ENCODE measurements at regions of chr2 and their contacts with region 1.

Region 1: DNA sequence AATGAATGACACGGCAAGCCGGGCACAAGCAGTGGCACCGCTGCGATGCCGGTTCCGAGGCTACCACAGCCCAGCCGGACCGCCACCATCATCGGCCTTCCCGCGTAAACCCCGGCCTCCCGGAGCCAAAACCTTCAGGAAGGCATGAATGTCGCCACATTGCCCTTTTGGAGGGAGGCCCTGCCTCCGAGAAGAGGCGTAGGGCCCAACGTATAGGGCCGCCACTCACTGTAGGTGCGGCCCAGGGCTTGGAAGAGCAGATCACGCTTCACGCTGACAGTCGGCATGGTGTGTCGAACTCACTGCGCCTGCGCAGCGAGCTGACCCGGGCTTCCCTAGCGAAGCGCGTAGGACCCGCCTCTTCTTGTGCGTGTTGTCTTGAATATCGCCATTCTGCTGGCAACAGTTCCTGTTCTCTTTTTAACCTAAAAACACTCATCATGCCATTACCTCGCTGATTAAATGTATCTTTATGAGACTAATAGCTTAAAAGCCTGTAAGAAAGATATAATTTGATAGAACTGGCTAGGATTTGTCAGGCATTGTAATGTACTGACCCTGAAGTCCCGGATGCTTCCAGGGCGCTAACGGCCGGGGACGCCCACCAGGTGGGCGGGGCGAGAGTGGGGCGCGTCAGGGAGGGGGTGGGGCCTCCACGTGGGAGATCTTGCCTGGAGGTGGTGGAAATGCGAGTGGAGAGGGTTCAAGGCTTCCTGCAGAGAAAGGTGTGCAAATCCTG is at the start of gene FARSB:
- DNase-seq: peak; percentile 94
- H3K4me3 Mint-ChIP-seq: peak within 1 kb of the TSS; percentile 98
- H3K27ac Mint-ChIP-seq: peak within 1 kb of the TSS; percentile 98
- H3K4me1 Mint-ChIP-seq: peaks cover 37% of the 10 kb centered on the region
- H3K27me3 Mint-ChIP-seq: no peaks in the 10 kb centered on the region
- total RNA-seq, gene FARSB: 46.4 to 46.8 TPM

Region 2: GRCh38 chr2:222424729-222425671 is 231.0 kb before region 1 on chr2:
- CTCF ChIA-PET with region 1: no interaction called
- intact Hi-C with region 1: loop called (anchors 1 kb)
- DNase-seq: peak; percentile 67
- H3K4me3 Mint-ChIP-seq: peak overlapping the region; percentile 83
- H3K27ac Mint-ChIP-seq: peak overlapping the region; percentile 88
- H3K4me1 Mint-ChIP-seq: peaks cover 42% of the 10 kb centered on the region
- H3K27me3 Mint-ChIP-seq: peaks cover 56% of the 10 kb centered on the region

Region 3: DNA sequence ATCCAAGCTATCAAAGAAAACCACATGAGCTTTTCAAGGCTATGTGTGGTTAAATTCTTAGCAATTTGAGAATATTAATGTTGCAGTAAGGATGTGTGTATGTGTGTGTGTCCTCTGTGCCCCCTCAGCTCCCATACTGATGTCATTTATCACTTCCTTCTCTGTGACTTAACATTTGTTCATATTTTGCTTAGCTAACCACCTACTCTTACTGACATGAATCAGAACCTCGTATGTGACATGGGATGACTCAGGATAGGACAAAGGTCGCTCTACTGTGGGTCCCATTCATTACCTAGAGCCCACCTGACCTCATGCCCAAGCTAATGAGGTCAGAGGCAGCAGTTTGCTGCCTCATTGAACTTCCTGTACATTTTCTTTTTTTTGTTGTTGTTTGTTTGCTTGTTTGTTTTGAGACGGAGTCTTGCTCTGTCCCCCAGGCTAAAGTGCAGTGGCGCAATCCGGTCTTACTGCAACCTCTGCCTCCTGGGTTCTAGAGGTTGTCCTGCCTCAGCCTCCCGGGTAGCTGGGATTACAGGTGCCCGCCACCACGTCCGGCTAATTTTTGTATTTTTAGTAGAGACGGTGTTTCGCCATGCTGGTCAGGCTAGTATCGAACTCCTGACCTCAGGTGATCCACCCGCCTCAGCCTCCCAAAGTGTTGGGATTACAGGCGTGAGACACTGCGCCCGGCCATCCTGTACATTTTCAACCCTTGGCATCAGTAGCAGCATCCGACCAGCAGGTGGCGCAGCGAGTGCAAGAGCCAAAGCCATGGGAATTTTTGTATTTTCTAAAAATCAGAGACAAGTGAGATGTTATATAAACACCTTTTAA is 52.0 kb after region 1 on chr2:
- CTCF ChIA-PET with region 1: interaction called, 3 read pairs
- intact Hi-C with region 1: loop called (anchors 2 kb)
- DNase-seq: peak; percentile 88
- H3K4me3 Mint-ChIP-seq: no peak overlapping the region
- H3K27ac Mint-ChIP-seq: no peak overlapping the region
- H3K4me1 Mint-ChIP-seq: peaks cover 6% of the 10 kb centered on the region
- H3K27me3 Mint-ChIP-seq: peaks cover 22% of the 10 kb centered on the region

Region 4: GRCh38 chr2:222743251-222743812 is 87.4 kb after region 1 on chr2:
- CTCF ChIA-PET with region 1: no interaction called
- intact Hi-C with region 1: no loop called
- DNase-seq: no peak
- H3K4me3 Mint-ChIP-seq: no peak overlapping the region
- H3K27ac Mint-ChIP-seq: no peak overlapping the region
- H3K4me1 Mint-ChIP-seq: peaks cover 5% of the 10 kb centered on the region
- H3K27me3 Mint-ChIP-seq: peaks cover 12% of the 10 kb centered on the region

Region 5: DNA sequence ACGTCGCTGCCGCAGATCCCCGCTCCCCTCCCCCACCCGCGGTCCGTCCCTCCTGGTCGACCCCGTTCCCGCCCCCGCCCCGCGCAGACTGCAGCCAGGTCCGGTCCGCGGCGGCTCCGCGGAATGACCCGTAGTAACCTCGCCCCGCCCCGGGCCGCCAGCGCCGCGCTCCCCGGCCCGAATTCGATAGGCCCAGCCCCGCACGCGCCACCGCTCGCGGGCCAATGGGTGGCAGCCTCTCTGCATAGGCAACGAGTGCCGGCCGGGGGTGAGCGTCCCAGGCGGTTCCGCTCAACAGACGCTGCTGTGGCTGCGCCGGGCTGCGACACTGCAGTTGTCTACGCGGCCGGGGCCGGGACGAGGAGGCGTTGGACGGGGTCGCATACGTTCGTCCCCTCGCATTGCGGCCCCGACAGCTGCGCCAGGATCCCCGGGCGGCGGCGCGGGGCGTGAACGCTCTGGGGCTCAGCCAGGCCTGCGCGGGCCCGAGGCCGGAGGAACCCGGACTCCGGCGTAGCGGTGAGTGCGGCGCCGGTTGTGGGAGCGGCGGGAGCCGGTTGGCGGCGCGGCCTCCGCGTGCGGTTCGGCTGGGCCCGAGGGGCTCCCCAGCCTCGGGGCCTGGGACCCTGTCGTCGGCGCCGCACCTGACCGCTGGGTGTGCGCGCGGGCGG is 204.9 kb after region 1 on chr2 and contains the start of gene ACSL3:
- CTCF ChIA-PET with region 1: no interaction called
- intact Hi-C with region 1: loop called (anchors 1 kb)
- DNase-seq: peak; percentile 95
- H3K4me3 Mint-ChIP-seq: peak within 1 kb of the TSS; percentile 75
- H3K27ac Mint-ChIP-seq: peak within 1 kb of the TSS; percentile 76
- H3K4me1 Mint-ChIP-seq: peaks cover 6% of the 10 kb centered on the region
- H3K27me3 Mint-ChIP-seq: no peaks in the 10 kb centered on the region
- total RNA-seq, gene ACSL3: 35.1 to 36.1 TPM

Region 6: DNA sequence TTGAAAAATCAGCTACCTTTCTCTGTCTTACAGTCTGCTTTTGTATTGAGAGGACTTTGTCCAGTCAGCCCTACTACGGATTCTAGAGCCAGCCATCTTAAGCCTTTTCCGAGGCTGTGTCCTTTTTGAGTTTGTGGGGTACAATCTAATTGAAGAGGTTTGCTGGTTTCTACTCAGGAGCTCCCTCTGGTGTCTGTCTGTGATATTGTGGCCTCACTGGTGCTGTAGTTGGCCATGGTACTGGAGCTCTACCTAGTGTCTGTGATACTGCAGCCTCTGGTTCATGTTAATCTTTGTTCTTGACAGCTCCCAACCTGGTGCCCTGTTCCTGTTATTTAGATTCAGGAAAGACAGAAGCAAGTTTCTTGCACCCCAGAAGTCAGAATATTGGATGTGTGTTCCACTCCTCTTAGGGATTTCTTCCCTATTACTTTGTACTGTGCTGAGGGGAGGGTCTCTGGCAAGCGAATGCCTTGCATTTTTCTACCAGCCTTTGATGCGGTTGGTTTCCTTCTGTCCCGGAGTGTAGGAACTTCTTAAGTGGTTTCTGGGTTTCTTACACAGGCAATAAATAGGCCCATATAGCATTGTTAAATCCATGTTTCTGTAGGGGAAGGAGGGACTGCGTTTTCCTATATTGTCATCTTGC is 283.4 kb after region 1 on chr2:
- CTCF ChIA-PET with region 1: no interaction called
- intact Hi-C with region 1: no loop called
- DNase-seq: peak; percentile 82
- H3K4me3 Mint-ChIP-seq: no peak overlapping the region
- H3K27ac Mint-ChIP-seq: no peak overlapping the region
- H3K4me1 Mint-ChIP-seq: peaks cover 13% of the 10 kb centered on the region
- H3K27me3 Mint-ChIP-seq: no peaks in the 10 kb centered on the region

Region 7: DNA sequence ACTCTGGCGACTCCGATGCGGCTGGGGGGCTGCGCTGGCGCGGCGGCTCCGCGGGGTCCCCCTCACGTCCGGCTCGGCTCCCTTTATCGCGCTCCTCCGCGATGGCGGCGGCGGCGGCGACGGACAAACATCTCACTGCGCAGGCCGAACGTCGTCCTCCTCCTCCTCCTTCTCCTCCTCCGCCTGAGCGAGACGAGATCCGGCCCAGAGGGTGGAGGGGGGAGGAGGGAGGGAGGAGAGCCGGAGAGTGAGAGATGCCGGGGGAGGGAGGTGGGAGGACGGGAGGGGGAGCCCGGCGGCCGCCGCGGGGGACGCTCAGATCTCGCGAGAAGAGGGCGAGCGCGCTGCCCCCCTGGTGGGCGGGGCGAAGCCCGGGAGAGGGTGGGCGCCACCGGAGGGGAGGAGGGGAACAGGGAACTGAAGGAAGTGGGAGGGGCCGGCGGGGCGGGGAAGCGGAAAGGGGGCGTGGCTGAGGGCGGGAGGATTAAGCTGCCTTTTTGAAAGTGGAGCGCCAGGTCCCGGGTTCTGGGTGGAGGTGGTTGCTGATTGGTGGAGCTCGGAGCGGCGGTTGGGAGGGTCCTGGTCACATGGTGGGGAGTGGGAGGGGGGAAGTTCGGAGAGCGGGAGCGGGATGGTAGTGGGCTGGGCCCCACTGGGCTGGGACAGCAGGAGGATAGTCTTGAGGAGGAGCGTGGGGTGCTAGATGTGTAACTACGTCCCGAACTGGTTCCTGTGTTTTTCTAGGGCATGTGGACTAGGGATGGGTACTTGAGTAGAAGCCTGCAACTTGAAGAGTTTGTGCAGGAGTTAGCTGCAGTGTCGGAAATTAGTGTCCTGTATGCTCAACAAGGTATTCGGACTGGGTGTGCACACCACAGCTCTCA is 1929.5 kb after region 1 on chr2 and contains the start of gene CUL3:
- CTCF ChIA-PET with region 1: no interaction called
- intact Hi-C with region 1: loop called (anchors 10 kb)
- DNase-seq: peak; percentile 100
- H3K4me3 Mint-ChIP-seq: peak within 1 kb of the TSS; percentile 92
- H3K27ac Mint-ChIP-seq: peak within 1 kb of the TSS; percentile 89
- H3K4me1 Mint-ChIP-seq: peaks cover 31% of the 10 kb centered on the region
- H3K27me3 Mint-ChIP-seq: no peaks in the 10 kb centered on the region
- total RNA-seq, gene CUL3: 61.7 to 66.0 TPM